ENCODE measurements at regions of chr12 and their contacts with region 1.

Region 1: DNA sequence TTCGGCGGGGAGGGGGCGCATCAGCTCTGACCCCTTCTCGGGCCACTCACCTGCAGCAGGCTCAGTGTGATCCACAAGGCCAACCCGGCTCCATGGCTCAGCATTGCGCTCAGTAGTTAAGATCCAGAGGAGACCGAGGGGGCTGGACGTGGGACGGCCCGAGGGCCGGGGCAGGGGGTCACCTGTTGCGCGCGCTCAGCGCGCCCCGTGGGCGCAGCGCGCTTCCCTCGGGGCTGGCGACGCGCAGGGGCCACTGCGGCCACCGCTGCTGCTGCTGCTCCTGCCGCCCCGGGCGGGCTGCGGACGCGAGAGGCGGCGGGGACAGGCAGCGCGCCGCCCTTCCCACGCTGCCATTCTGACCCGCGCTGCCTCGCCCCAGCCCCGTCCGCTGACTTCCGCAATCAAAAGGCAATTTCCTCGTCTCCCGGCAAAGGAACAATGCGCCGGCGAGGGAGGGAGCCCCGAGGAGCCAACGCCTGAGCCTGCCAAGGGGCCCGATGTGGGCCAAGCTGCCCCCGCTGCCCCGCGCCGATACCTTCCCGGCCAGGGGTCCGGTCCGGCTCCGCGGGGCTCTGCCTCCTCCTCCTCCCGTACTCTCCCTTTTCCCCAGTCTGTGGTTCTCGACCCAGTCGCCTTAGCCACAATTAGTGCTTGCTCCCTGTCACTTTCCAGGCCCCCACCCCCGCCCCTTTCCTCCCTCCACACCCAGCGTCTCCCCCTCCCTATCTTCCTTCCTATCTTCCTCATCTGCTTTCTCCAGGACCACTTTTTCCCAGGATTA is 27.3 kb downstream of the PTPRB start:
- DNase-seq: peak; percentile 79
- H3K4me3 ChIP-seq: peak overlapping the region; percentile 33 to 49 (median 37)
- H3K27ac ChIP-seq: peak overlapping the region; percentile 77
- H3K4me1 ChIP-seq: peaks cover 67% of the 10 kb centered on the region
- H3K27me3 ChIP-seq: no peaks in the 10 kb centered on the region
- CTCF ChIP-seq: no peak
- POLR2A ChIP-seq: peak; percentile 45

Region 2: GRCh38 chr12:70549340-70550179 is 60.3 kb before region 1 on chr12:
- CTCF ChIA-PET with region 1: no interaction called
- POLR2A ChIA-PET with region 1: no interaction called
- dilution Hi-C with region 1: no loop called
- intact Hi-C with region 1: no loop called
- DNase-seq: peak; percentile 93
- H3K4me3 ChIP-seq: no peak overlapping the region
- H3K27ac ChIP-seq: peak overlapping the region; percentile 76
- H3K4me1 ChIP-seq: peaks cover 38% of the 10 kb centered on the region
- H3K27me3 ChIP-seq: no peaks in the 10 kb centered on the region
- CTCF ChIP-seq: no peak
- POLR2A ChIP-seq: no peak

Region 3: GRCh38 chr12:70590051-70590450 is 19.9 kb before region 1 on chr12:
- CTCF ChIA-PET with region 1: interaction called, 16 read pairs
- POLR2A ChIA-PET with region 1: no interaction called
- dilution Hi-C with region 1: no loop called
- intact Hi-C with region 1: loop called (anchors 2 kb)
- DNase-seq: peak; percentile 80
- H3K4me3 ChIP-seq: no peak overlapping the region
- H3K27ac ChIP-seq: no peak overlapping the region
- H3K4me1 ChIP-seq: no peaks in the 10 kb centered on the region
- H3K27me3 ChIP-seq: no peaks in the 10 kb centered on the region
- CTCF ChIP-seq: peak; percentile 82 to 88
- POLR2A ChIP-seq: no peak

Region 4: DNA sequence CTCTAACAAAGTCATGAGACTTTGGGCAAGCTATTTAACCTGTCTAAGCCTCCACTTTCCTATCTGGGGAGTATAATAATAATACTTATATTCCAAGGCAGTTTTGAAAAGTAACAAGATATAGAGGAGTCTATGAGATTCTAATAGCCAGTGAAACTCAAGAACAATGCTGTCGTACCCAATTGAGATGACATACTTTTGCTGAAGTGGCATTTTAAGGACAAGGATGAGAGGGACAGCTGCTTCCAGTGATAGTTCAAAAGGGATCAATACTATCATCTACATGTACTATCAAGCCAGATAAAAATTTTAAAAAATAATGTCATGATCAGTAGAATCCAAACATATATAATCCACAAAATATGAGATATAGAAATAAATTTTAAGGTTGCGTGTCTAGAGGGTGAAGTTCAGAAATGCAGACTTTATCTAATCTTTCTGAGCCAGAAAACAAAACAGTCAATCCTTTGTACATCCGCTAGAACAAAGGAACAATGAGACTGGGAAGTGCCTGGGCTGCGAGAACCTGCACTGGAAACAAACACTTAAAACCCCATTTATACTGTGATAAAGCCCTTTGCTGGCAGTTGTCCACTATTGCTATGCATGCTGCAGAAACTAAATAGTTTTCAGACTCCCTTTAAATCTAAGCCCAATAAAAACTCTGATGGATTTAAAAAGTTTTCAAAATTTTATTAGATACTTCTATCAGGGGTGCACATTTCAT is 11.3 kb before region 1 on chr12:
- CTCF ChIA-PET with region 1: interaction called, 3 read pairs
- POLR2A ChIA-PET with region 1: no interaction called
- dilution Hi-C with region 1: no loop called
- intact Hi-C with region 1: loop called (anchors 1 kb)
- DNase-seq: peak; percentile 96
- H3K4me3 ChIP-seq: peak overlapping the region in 1 of 3 experiments; percentile 40
- H3K27ac ChIP-seq: peak overlapping the region; percentile 92
- H3K4me1 ChIP-seq: peaks cover 48% of the 10 kb centered on the region
- H3K27me3 ChIP-seq: no peaks in the 10 kb centered on the region
- CTCF ChIP-seq: no peak
- POLR2A ChIP-seq: peak; percentile 32